T-cell (primary cell): ENCODE measurements at regions of chr21 and their contacts with region 1.

Region 1: GRCh38 chr21:44691686-44692085 is 5.3 kb upstream of the KRTAP10-12 start:
- DNase-seq: no peak
- ATAC-seq: peak in 1 of 4 experiments; percentile 51
- H3K4me3 ChIP-seq: no peak overlapping the region
- H3K4me3 Mint-ChIP-seq: no peak overlapping the region
- H3K27ac ChIP-seq: no peak overlapping the region
- H3K27ac Mint-ChIP-seq: peak overlapping the region in 1 of 2 donors; percentile 16
- H3K4me1 ChIP-seq: peaks cover 0 to 3% of the 10 kb centered on the region in 2 experiments
- H3K4me1 Mint-ChIP-seq: peaks cover 18 to 23% (median 18%) of the 10 kb centered on the region in 3 donors
- H3K27me3 ChIP-seq: peaks cover 0 to 22% of the 10 kb centered on the region in 2 experiments
- H3K27me3 Mint-ChIP-seq: peaks cover 6 to 19% of the 10 kb centered on the region in 2 donors

Region 2: GRCh38 chr21:44593598-44594405 is 97.9 kb before region 1 on chr21:
- CTCF ChIA-PET with region 1: no interaction called
- POLR2A ChIA-PET with region 1: interaction called in 1 of 2 experiments, 12 read pairs
- DNase-seq: no peak
- ATAC-seq: no peak
- H3K4me3 ChIP-seq: no peak overlapping the region
- H3K4me3 Mint-ChIP-seq: no peak overlapping the region
- H3K27ac ChIP-seq: no peak overlapping the region
- H3K27ac Mint-ChIP-seq: no peak overlapping the region
- H3K4me1 ChIP-seq: peaks cover 0 to 2% of the 10 kb centered on the region in 2 experiments
- H3K4me1 Mint-ChIP-seq: peaks cover 0 to 2% (median 0%) of the 10 kb centered on the region in 3 donors
- H3K27me3 ChIP-seq: peaks cover 0 to 25% of the 10 kb centered on the region in 2 experiments
- H3K27me3 Mint-ChIP-seq: peaks cover 3 to 16% of the 10 kb centered on the region in 2 donors